Panc1 (cell line): ENCODE measurements at regions of chr9 and their contacts with region 1.

Region 1: GRCh38 chr9:91930475-91930874 is 19.6 kb downstream of the ROR2 start:
- DNase-seq: no peak
- ATAC-seq: no peak
- H3K4me3 ChIP-seq: no peak overlapping the region
- H3K27ac ChIP-seq: no peak overlapping the region
- H3K4me1 ChIP-seq: no peaks in the 10 kb centered on the region
- H3K27me3 ChIP-seq: no peaks in the 10 kb centered on the region
- CTCF ChIP-seq: no peak

Region 2: GRCh38 chr9:91911657-91912056 is 18.8 kb before region 1 on chr9:
- CTCF ChIA-PET with region 1: no interaction called
- POLR2A ChIA-PET with region 1: interaction called, 13 read pairs
- in situ Hi-C with region 1: no loop called
- intact Hi-C with region 1: no loop called
- DNase-seq: no peak
- ATAC-seq: no peak
- H3K4me3 ChIP-seq: no peak overlapping the region
- H3K27ac ChIP-seq: no peak overlapping the region
- H3K4me1 ChIP-seq: no peaks in the 10 kb centered on the region
- H3K27me3 ChIP-seq: no peaks in the 10 kb centered on the region
- CTCF ChIP-seq: no peak